Gastrocnemius medialis (tissue), 4 donors: ENCODE measurements at regions of chr15 and their contacts with region 1.

Region 1: DNA sequence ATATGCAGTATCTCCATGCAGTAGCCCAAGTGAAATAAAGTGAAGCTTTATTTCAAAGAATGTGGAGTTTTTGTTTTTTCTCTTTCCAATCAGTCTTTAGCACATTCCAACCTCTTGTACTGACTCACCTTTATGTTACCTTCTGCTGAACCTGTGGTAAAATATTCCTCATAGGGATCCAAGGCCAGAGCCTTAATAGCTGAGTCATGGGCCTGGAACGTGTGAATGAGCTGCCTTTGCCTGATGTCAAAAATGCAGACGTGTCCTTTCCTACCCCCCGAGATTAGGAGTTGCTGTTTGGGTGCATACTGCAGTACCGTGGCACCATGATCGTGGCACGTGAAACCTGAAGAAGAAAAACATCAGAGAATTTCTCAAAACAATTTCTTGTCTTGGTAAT is 108.5 kb downstream of the GLDN start:
- DNase-seq: no peak
- ATAC-seq: no peak
- H3K4me3 ChIP-seq: no peak overlapping the region
- H3K27ac ChIP-seq: no peak overlapping the region
- H3K4me1 ChIP-seq: no peaks in the 10 kb centered on the region
- H3K27me3 ChIP-seq: no peaks in the 10 kb centered on the region
- CTCF ChIP-seq: no peak
- POLR2A ChIP-seq: no peak

Region 2: DNA sequence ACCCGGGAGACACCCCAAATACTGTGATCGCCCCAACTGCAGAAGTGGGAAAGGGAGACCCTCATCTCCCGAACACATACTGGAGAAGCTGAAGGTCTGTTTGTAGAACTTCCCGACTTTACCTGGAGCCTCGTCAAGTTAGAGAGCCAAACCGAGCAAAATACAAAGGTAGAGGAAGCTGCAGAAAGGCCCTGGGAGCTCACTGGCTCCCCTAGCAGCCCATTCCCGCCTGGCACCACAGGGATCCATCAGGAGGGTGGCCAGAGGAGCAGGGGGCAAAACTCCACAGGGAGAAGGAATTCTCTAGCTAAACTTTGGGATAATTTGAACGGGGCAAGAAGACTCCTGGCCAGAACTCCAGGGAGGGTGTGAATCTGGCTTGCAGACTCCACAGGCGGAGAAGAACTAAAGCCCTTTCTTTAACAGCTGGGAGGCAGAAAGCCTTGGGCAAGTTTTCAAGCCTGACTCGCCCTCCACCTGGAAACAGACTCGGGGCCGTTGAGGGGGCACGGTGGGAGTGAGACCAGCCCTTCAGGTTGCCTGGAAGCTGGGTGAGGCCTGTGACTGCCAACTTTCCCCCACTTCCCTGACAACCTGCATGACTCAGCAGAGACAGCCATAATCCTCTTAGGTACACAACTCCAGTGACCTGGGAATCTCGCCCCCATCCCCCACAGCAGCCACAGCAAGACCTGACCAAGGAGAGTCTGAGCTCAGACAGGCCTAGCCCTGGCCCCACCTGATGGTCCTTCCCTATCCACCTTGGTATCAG is 1239.5 kb before region 1 on chr15:
- in situ Hi-C with region 1: no loop called
- intact Hi-C with region 1: no loop called
- DNase-seq: no peak
- ATAC-seq: no peak
- H3K4me3 ChIP-seq: no peak overlapping the region
- H3K27ac ChIP-seq: no peak overlapping the region
- H3K4me1 ChIP-seq: no peaks in the 10 kb centered on the region
- H3K27me3 ChIP-seq: no peaks in the 10 kb centered on the region
- CTCF ChIP-seq: no peak
- POLR2A ChIP-seq: no peak

Region 3: GRCh38 chr15:51460796-51461195 is 10.8 kb after region 1 on chr15:
- in situ Hi-C with region 1: no loop called
- intact Hi-C with region 1: no loop called
- DNase-seq: no peak
- ATAC-seq: no peak
- H3K4me3 ChIP-seq: no peak overlapping the region
- H3K27ac ChIP-seq: no peak overlapping the region
- H3K4me1 ChIP-seq: no peaks in the 10 kb centered on the region
- H3K27me3 ChIP-seq: no peaks in the 10 kb centered on the region
- CTCF ChIP-seq: no peak
- POLR2A ChIP-seq: no peak

Region 4: DNA sequence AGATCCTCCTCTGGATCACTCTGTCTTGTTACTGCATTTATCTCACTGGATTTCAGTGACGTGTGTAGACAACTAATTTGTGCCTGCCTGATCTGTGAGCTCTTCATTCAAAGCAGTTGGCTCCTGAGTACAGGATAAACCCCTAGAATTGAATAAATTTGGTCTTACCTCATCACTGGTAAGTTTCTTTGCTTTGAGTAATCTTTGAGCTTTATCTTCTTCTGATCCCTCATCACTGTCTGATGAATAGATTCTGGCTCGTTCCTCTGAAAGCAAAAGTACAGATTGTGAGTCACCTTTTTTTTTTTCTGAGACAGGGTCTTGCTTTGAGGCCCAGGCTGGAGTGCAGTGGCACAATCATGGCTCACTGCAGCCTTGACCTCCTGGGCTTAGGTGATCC is 497.1 kb after region 1 on chr15:
- in situ Hi-C with region 1: no loop called
- intact Hi-C with region 1: no loop called
- DNase-seq: no peak
- ATAC-seq: no peak
- H3K4me3 ChIP-seq: no peak overlapping the region
- H3K27ac ChIP-seq: no peak overlapping the region
- H3K4me1 ChIP-seq: peaks cover 5 to 6% of the 10 kb centered on the region in 2 donors
- H3K27me3 ChIP-seq: no peaks in the 10 kb centered on the region
- CTCF ChIP-seq: no peak
- POLR2A ChIP-seq: no peak

Region 5: DNA sequence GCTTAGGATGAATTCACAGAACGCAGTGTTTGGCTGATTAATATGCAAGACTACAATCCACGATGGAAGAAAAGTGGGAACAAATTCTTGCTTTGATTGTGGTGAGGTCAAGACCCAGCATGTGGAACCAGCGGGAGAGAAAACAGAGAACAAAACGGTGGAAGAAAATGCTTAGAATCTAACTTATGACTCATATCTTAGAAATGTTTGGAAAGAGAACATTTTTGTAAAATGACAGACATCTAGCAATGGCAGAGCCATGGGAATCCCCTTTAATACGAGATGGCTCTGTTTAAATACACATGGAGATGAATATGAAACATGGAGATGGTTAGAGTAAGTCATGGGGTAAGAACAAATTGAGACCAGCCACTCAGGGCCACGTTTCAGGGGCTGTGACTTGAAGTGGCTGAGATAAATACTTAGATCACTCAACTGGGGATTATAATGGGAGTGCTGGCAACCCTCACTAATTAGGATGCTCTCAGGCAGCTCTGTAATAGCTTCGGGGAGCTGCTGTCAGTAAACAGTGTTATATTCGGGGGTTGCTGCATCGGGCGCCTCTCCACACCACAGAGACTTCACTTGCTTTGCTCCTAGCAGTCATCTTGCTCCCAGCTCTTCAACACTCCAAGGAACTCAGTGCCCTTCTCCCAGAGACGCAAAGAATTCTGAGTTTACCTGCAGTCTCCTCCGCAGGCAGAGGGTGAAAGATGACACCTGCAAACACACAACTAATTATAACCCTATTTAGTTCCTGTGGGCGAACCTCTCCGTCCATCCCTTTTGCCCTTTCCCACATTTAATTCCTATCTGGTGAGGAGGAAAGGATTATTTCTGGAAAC is 1408.2 kb after region 1 on chr15:
- in situ Hi-C with region 1: no loop called
- intact Hi-C with region 1: loop called (anchors 10 kb)
- DNase-seq: no peak
- ATAC-seq: no peak
- H3K4me3 ChIP-seq: no peak overlapping the region
- H3K27ac ChIP-seq: no peak overlapping the region
- H3K4me1 ChIP-seq: no peaks in the 10 kb centered on the region
- H3K27me3 ChIP-seq: peaks cover 0 to 8% (median 0%) of the 10 kb centered on the region in 3 donors
- CTCF ChIP-seq: no peak
- POLR2A ChIP-seq: no peak